CD8-positive, alpha-beta T cell (primary cell): ENCODE measurements at regions of chr18 and their contacts with region 1.

Region 1: GRCh38 chr18:9614401-9615279 is at the start of gene PPP4R1:
- DNase-seq: peak; percentile 36 to 81 (median 66)
- ATAC-seq: peak; percentile 67
- H3K4me3 ChIP-seq: peak within 1 kb of the TSS; percentile 64 to 76
- H3K4me3 Mint-ChIP-seq: peak within 1 kb of the TSS; percentile 94
- H3K27ac ChIP-seq: peak within 1 kb of the TSS; percentile 4 to 63
- H3K27ac Mint-ChIP-seq: peak within 1 kb of the TSS; percentile 90
- H3K4me1 ChIP-seq: peaks cover 20% of the 10 kb centered on the region
- H3K4me1 Mint-ChIP-seq: peaks cover 36% of the 10 kb centered on the region
- H3K27me3 ChIP-seq: no peaks in the 10 kb centered on the region
- H3K27me3 Mint-ChIP-seq: no peaks in the 10 kb centered on the region
- CTCF ChIP-seq: no peak
- total RNA-seq, gene PPP4R1: 35.1 to 40.1 TPM

Region 2: DNA sequence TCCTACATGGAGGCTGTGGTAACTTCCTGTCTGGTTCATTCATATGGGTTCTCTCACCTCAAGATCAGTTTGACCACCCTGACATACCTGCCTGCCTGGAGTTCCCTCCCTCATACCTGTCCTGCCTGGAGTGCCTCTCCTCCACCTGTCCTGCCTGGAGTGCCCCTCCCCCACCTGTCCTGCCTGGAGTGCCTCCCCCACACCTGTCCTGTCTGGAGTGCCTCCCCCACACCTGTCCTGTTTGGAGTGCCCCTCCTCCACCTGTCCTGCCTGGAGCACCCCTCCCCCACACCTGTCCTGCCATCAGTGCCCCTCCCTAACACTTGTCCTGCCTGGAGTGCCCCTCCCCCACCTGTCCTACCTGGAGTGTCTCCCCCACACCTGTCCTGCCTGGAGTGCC is 1585.6 kb before region 1 on chr18:
- CTCF ChIA-PET with region 1: no interaction called
- POLR2A ChIA-PET with region 1: no interaction called
- intact Hi-C with region 1: no loop called
- DNase-seq: no peak
- ATAC-seq: no peak
- H3K4me3 ChIP-seq: no peak overlapping the region
- H3K4me3 Mint-ChIP-seq: no peak overlapping the region
- H3K27ac ChIP-seq: no peak overlapping the region
- H3K27ac Mint-ChIP-seq: no peak overlapping the region
- H3K4me1 ChIP-seq: no peaks in the 10 kb centered on the region
- H3K4me1 Mint-ChIP-seq: no peaks in the 10 kb centered on the region
- H3K27me3 ChIP-seq: no peaks in the 10 kb centered on the region
- H3K27me3 Mint-ChIP-seq: no peaks in the 10 kb centered on the region
- CTCF ChIP-seq: no peak

Region 3: DNA sequence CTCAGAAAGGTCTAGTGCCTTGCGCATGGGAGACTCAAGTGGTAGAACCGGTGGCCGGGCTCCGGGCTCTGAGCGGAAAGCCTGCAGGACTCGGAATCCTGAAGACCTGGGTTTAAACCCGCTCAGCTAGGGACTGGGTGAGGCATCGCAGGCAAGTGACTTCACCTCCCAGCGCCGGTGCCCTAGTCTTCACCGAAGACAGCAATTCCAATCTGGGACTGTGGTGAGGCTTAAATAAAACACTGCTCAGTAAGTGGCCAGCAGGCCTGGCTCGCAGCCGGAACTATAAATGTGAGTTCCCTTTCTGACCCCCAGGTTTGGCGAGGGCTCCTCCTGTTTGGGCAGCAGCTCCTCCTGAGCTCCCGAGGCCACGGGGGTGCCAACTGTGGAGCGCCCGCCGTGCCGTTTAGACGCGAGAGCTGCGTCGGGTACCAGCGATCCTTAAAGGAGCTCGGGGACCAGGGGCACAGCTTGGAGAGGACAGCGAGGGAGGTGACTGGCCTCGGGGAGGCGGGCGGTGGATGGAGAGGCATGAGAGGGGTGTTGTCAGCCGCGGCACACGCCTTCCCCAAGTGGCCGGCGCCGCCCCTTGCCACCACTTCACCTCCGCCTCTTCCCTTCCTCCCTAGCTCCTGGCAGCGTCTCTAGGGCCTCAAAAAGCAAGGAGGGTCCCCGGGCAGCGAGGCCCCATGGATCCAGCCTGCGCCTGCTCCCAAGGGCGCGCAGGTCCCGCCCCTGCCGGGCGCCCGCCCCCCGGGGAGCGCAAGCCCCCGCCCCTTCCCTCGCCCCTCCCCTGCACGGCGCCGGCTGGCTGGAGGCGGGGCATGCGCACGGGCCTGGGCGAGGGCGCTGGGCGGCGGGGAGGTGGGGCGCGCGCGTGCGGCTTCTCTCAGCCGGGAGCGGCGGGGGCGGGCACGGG is 910.0 kb before region 1 on chr18:
- CTCF ChIA-PET with region 1: no interaction called
- POLR2A ChIA-PET with region 1: no interaction called
- intact Hi-C with region 1: loop called (anchors 2 to 5 kb)
- DNase-seq: peak; percentile 59 to 91 (median 84)
- ATAC-seq: peak; percentile 95
- H3K4me3 ChIP-seq: peak overlapping the region; percentile 73
- H3K4me3 Mint-ChIP-seq: peak overlapping the region; percentile 89
- H3K27ac ChIP-seq: no peak overlapping the region
- H3K27ac Mint-ChIP-seq: no peak overlapping the region
- H3K4me1 ChIP-seq: peaks cover 15% of the 10 kb centered on the region
- H3K4me1 Mint-ChIP-seq: peaks cover 17% of the 10 kb centered on the region
- H3K27me3 ChIP-seq: peaks cover 16 to 24% of the 10 kb centered on the region in 2 experiments
- H3K27me3 Mint-ChIP-seq: peaks cover 62% of the 10 kb centered on the region
- CTCF ChIP-seq: no peak

Region 4: DNA sequence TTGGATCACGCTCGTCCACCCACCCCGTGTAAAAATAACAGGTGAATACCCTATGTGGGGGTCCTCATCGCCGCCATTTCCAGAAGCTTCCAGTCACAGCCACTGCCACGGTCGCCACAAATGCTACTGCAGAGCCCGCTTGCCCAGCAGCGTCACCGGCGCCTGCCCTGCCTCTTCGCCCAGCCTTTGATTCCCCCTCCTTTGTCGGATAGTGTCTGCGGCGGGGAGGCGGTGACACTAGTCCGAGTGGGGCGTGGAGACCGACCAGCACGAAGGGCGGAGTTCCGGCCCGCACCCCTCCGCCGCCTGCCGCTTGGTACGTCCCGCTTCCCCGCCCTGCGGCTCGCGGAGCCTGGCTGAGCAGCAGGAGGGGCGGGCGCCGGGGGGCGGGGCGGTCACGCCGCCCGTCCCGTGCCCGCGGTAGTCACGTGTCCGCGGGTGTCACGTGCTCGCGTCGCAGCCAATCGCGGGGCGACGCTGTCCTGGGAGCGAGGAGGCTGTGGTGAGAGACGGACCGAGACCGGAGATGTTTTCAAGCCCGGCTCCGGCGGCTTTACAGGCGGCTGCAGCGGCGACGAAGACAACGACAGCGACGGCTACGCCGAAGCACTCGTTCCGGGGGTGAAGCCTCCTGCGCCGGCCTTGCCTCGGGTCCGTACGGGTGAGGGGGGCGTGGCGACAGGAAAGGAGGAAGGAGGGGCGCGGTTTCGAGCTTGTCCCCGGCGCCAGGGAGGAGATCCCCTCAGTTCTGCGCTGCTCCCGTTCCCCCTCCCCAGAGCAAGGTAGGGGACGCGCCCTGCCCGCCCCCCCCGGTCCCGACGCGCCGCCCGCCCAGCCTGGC is 478.1 kb before region 1 on chr18 and contains the start of gene ANKRD12:
- CTCF ChIA-PET with region 1: interaction called, 3 read pairs
- POLR2A ChIA-PET with region 1: no interaction called
- intact Hi-C with region 1: loop called in 1 of 2 experiments (anchors 10 kb)
- DNase-seq: peak; percentile 96 to 99 (median 98)
- ATAC-seq: peak; percentile 65
- H3K4me3 ChIP-seq: peak within 1 kb of the TSS; percentile 87 to 93
- H3K4me3 Mint-ChIP-seq: peak within 1 kb of the TSS; percentile 99
- H3K27ac ChIP-seq: peak within 1 kb of the TSS; percentile 94 to 96
- H3K27ac Mint-ChIP-seq: peak within 1 kb of the TSS; percentile 99
- H3K4me1 ChIP-seq: peaks cover 56% of the 10 kb centered on the region
- H3K4me1 Mint-ChIP-seq: peaks cover 68% of the 10 kb centered on the region
- H3K27me3 ChIP-seq: no peaks in the 10 kb centered on the region
- H3K27me3 Mint-ChIP-seq: no peaks in the 10 kb centered on the region
- CTCF ChIP-seq: no peak
- total RNA-seq, gene ANKRD12: 167 to 177 TPM

Region 5: GRCh38 chr18:9578306-9578705 is 36.3 kb before region 1 on chr18:
- CTCF ChIA-PET with region 1: no interaction called
- POLR2A ChIA-PET with region 1: no interaction called
- intact Hi-C with region 1: no loop called
- DNase-seq: no peak
- ATAC-seq: no peak
- H3K4me3 ChIP-seq: no peak overlapping the region
- H3K4me3 Mint-ChIP-seq: no peak overlapping the region
- H3K27ac ChIP-seq: no peak overlapping the region
- H3K27ac Mint-ChIP-seq: no peak overlapping the region
- H3K4me1 ChIP-seq: no peaks in the 10 kb centered on the region
- H3K4me1 Mint-ChIP-seq: no peaks in the 10 kb centered on the region
- H3K27me3 ChIP-seq: no peaks in the 10 kb centered on the region
- H3K27me3 Mint-ChIP-seq: no peaks in the 10 kb centered on the region
- CTCF ChIP-seq: no peak

Region 6: DNA sequence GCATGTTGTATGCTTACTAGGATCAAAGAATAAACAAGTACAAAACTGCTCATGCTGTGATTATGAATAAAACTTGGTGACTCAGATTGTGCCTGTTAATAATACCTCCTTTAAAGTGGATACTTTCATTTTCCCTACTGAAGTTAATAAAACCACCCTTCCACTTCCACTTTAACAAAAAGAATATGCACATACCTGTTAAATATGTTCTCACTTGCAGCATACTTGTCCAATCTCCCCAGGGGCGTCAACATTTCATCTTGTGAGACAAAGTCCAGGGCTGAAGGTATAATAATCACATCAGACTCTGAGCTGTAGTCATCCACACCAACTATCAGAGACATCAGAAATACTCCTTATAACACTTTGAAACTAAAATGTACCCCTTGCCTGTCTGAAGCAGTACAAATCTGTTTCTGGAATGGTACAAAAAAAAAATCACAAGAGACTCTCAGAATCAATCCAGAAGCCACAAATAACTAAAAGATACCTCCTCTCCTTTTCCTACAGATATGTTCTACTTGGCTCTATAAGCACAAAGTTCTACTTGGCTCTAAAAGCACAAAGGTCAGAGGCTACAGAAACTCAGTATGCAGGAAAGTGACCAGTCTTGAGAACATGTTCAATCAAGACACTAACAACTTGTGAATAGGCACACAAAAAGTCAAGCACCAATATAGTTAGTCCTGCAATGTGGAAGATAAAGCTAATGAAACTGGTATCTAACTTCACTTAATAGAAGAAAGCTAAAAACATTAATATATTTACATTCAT is 19.6 kb before region 1 on chr18:
- CTCF ChIA-PET with region 1: interaction called, 11 read pairs
- POLR2A ChIA-PET with region 1: no interaction called
- intact Hi-C with region 1: no loop called
- DNase-seq: no peak
- ATAC-seq: no peak
- H3K4me3 ChIP-seq: no peak overlapping the region
- H3K4me3 Mint-ChIP-seq: no peak overlapping the region
- H3K27ac ChIP-seq: no peak overlapping the region
- H3K27ac Mint-ChIP-seq: no peak overlapping the region
- H3K4me1 ChIP-seq: no peaks in the 10 kb centered on the region
- H3K4me1 Mint-ChIP-seq: peaks cover 21% of the 10 kb centered on the region
- H3K27me3 ChIP-seq: no peaks in the 10 kb centered on the region
- H3K27me3 Mint-ChIP-seq: no peaks in the 10 kb centered on the region
- CTCF ChIP-seq: no peak

Region 7: GRCh38 chr18:9722691-9723090 is 108.1 kb after region 1 on chr18:
- CTCF ChIA-PET with region 1: no interaction called
- POLR2A ChIA-PET with region 1: no interaction called
- intact Hi-C with region 1: loop called in 1 of 2 experiments (anchors 2 kb)
- DNase-seq: no peak
- ATAC-seq: no peak
- H3K4me3 ChIP-seq: no peak overlapping the region
- H3K4me3 Mint-ChIP-seq: no peak overlapping the region
- H3K27ac ChIP-seq: no peak overlapping the region
- H3K27ac Mint-ChIP-seq: no peak overlapping the region
- H3K4me1 ChIP-seq: no peaks in the 10 kb centered on the region
- H3K4me1 Mint-ChIP-seq: no peaks in the 10 kb centered on the region
- H3K27me3 ChIP-seq: no peaks in the 10 kb centered on the region
- H3K27me3 Mint-ChIP-seq: peaks cover 19% of the 10 kb centered on the region
- CTCF ChIP-seq: no peak